ENCODE measurements at regions of chr17 and their contacts with region 1.

Region 1: GRCh38 chr17:58172369-58173071 is 5.7 kb downstream of the OR4D2 start:
- DNase-seq: peak; percentile 72
- H3K4me3 Mint-ChIP-seq: no peak overlapping the region
- H3K27ac Mint-ChIP-seq: no peak overlapping the region
- H3K4me1 Mint-ChIP-seq: peaks cover 35% of the 10 kb centered on the region
- H3K27me3 Mint-ChIP-seq: peaks cover 26% of the 10 kb centered on the region

Region 2: DNA sequence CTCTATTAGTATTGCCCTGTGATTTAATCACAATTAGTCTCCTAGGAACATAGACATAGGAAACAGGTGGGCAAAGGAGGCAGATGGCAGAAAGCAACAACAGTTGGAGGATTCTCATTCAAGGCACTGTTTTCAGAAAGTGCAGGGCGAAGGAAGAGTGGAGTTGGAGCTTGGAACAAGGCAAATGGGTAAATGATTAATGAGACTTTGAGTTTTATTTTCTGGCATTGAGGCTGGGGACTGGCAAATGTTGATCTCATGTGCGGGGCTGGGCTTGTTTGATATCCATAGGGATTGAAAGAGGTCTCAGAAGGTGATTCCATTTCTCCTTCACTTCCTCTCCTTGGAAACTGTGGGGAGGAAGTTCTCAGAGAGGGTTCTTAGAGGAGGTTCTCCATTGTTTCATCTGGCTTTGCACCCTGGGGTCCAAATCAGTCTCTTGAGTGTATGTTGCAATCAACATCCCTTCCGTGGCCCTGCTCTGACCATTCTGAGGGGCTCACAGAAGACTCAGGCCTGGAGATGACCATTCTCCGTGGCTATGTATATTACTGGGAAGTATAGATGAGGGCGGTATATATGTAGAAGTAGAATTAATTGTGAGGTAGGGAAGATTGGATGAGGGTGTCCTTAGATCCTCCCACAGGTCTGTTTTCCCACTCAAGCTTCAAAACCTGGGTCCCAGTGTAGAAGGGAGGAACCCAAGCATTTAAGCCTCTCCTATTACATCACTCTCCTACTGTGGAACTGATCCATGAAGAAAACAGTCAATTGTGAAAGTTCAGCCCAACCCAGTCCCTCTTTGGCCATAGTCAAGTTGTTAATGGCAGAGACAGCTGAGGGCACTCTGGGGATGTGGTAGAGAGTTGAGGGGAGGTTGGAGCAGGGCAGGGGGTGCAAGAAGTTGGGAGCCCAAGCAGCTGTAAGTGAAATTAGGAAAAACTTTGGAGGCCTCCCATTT is 129.0 kb before region 1 on chr17:
- CTCF ChIA-PET with region 1: no interaction called
- DNase-seq: no peak
- H3K4me3 Mint-ChIP-seq: no peak overlapping the region
- H3K27ac Mint-ChIP-seq: no peak overlapping the region
- H3K4me1 Mint-ChIP-seq: no peaks in the 10 kb centered on the region
- H3K27me3 Mint-ChIP-seq: peaks cover 65% of the 10 kb centered on the region

Region 3: GRCh38 chr17:58112970-58113631 is 59.4 kb before region 1 on chr17:
- CTCF ChIA-PET with region 1: interaction called, 11 read pairs
- DNase-seq: peak; percentile 91
- H3K4me3 Mint-ChIP-seq: no peak overlapping the region
- H3K27ac Mint-ChIP-seq: no peak overlapping the region
- H3K4me1 Mint-ChIP-seq: no peaks in the 10 kb centered on the region
- H3K27me3 Mint-ChIP-seq: peaks cover 48% of the 10 kb centered on the region

Region 4: GRCh38 chr17:58121925-58122324 is 50.6 kb before region 1 on chr17:
- CTCF ChIA-PET with region 1: interaction called, 79 read pairs
- DNase-seq: peak; percentile 60
- H3K4me3 Mint-ChIP-seq: no peak overlapping the region
- H3K27ac Mint-ChIP-seq: no peak overlapping the region
- H3K4me1 Mint-ChIP-seq: peaks cover 6% of the 10 kb centered on the region
- H3K27me3 Mint-ChIP-seq: peaks cover 24% of the 10 kb centered on the region

Measured in activated naive CD4-positive, alpha-beta T cell treated with anti-CD3 and anti-CD28 coated beads, Interleukin-2, amount 10 ng/mL, durations not matched to agents 7 days and 5 days (primary cell).